ENCODE measurements at regions of chrX and their contacts with region 1.

Region 1: GRCh38 chrX:119516157-119516702 is 48.0 kb downstream of the SLC25A5 start:
- DNase-seq: peak; percentile 67
- H3K4me3 ChIP-seq: no peak overlapping the region
- H3K27ac ChIP-seq: no peak overlapping the region
- H3K4me1 ChIP-seq: no peaks in the 10 kb centered on the region
- H3K27me3 ChIP-seq: no peaks in the 10 kb centered on the region
- CTCF ChIP-seq: peak; percentile 69 to 82
- POLR2A ChIP-seq: no peak

Region 2: GRCh38 chrX:119325456-119325855 is 190.8 kb before region 1 on chrX:
- CTCF ChIA-PET with region 1: no interaction called
- POLR2A ChIA-PET with region 1: no interaction called
- dilution Hi-C with region 1: no loop called
- intact Hi-C with region 1: no loop called
- DNase-seq: no peak
- H3K4me3 ChIP-seq: no peak overlapping the region
- H3K27ac ChIP-seq: no peak overlapping the region
- H3K4me1 ChIP-seq: no peaks in the 10 kb centered on the region
- H3K27me3 ChIP-seq: no peaks in the 10 kb centered on the region
- CTCF ChIP-seq: no peak
- POLR2A ChIP-seq: no peak

Region 3: GRCh38 chrX:119391279-119391678 is 125.0 kb before region 1 on chrX:
- CTCF ChIA-PET with region 1: interaction called, 3 read pairs
- POLR2A ChIA-PET with region 1: no interaction called
- dilution Hi-C with region 1: no loop called
- intact Hi-C with region 1: loop called (anchors 1 kb)
- DNase-seq: peak; percentile 34
- H3K4me3 ChIP-seq: no peak overlapping the region
- H3K27ac ChIP-seq: no peak overlapping the region
- H3K4me1 ChIP-seq: no peaks in the 10 kb centered on the region
- H3K27me3 ChIP-seq: no peaks in the 10 kb centered on the region
- CTCF ChIP-seq: peak in 1 of 2 donors; percentile 15
- POLR2A ChIP-seq: no peak

Region 4: GRCh38 chrX:119410027-119410823 is 106.0 kb before region 1 on chrX:
- CTCF ChIA-PET with region 1: no interaction called
- POLR2A ChIA-PET with region 1: no interaction called
- dilution Hi-C with region 1: no loop called
- intact Hi-C with region 1: no loop called
- DNase-seq: no peak
- H3K4me3 ChIP-seq: no peak overlapping the region
- H3K27ac ChIP-seq: no peak overlapping the region
- H3K4me1 ChIP-seq: no peaks in the 10 kb centered on the region
- H3K27me3 ChIP-seq: no peaks in the 10 kb centered on the region
- CTCF ChIP-seq: no peak
- POLR2A ChIP-seq: no peak

Region 5: DNA sequence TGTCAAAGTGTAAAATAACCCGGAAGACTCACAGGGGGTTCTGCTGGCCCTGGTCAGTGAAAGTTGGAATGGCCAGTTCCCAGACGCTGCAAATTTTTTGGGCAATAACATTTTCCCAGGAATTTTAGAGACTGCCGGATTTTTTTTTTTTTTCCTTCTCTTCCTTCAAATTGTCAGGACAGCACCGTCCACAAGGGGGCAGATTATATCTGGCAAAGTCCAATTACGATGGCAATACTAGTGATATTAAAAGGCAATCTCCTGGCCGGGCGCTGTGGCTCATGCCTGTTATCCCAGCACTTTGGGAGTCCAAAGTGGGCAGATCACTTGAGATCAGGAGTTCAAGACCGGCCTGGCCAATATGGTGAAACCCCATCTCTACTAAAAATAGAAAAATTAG is 27.5 kb before region 1 on chrX:
- CTCF ChIA-PET with region 1: interaction called, 217 read pairs
- POLR2A ChIA-PET with region 1: no interaction called
- dilution Hi-C with region 1: no loop called
- intact Hi-C with region 1: loop called (anchors 1 kb)
- DNase-seq: peak; percentile 33
- H3K4me3 ChIP-seq: no peak overlapping the region
- H3K27ac ChIP-seq: no peak overlapping the region
- H3K4me1 ChIP-seq: no peaks in the 10 kb centered on the region
- H3K27me3 ChIP-seq: no peaks in the 10 kb centered on the region
- CTCF ChIP-seq: peak; percentile 39 to 40
- POLR2A ChIP-seq: no peak

Region 6: GRCh38 chrX:119574394-119575266 is 58.4 kb after region 1 on chrX and contains the start of gene UBE2A:
- CTCF ChIA-PET with region 1: interaction called, 4 read pairs
- POLR2A ChIA-PET with region 1: no interaction called
- dilution Hi-C with region 1: no loop called
- intact Hi-C with region 1: loop called (anchors 1 kb)
- DNase-seq: peak; percentile 90
- H3K4me3 ChIP-seq: peak within 1 kb of the TSS; percentile 75 to 85 (median 85)
- H3K27ac ChIP-seq: peak within 1 kb of the TSS; percentile 71
- H3K4me1 ChIP-seq: peaks cover 10% of the 10 kb centered on the region
- H3K27me3 ChIP-seq: no peaks in the 10 kb centered on the region
- CTCF ChIP-seq: no peak
- POLR2A ChIP-seq: peak; percentile 82
- total RNA-seq, gene UBE2A: 66.1 and 66.9 TPM in 2 replicates

Region 7: DNA sequence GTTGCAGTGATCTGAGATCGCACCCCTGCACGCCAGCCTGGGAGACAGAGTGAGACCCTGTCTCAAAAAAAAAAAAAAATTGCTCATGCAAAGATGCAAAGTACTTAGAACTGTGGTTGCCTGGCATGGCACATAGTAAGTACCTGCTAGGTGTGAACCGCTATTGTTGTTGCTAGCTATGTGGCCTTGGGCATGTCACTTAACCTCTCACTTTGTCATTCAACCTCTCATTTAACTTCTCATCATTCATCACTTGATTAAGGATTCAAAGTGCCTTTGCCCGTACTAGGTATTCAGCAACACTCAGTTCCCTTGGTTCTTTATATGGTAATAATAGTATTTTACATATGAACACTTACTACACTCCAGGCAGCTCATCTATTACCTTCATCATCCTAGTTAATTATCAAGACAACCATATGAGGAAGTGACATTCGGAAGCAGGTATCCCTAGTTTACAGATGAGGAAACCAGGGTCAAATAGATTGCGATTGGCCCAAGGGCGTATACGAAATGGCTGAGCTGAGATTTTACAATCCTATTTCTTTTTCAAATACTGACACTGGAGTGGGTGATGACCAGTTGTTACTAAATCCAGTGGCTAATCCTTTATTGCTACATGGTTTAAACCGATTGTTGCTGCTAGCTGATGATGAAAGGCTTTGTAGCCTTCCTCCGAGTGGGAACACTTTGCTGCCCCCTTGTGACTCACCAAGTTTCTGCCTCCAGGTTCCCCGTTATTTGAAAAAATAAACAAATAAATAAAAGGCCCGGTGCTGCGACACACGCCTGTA is 213.4 kb after region 1 on chrX:
- CTCF ChIA-PET with region 1: interaction called, 28 read pairs
- POLR2A ChIA-PET with region 1: no interaction called
- dilution Hi-C with region 1: no loop called
- intact Hi-C with region 1: loop called (anchors 1 kb)
- DNase-seq: peak; percentile 59
- H3K4me3 ChIP-seq: no peak overlapping the region
- H3K27ac ChIP-seq: no peak overlapping the region
- H3K4me1 ChIP-seq: no peaks in the 10 kb centered on the region
- H3K27me3 ChIP-seq: no peaks in the 10 kb centered on the region
- CTCF ChIP-seq: peak; percentile 35 to 50
- POLR2A ChIP-seq: no peak

Region 8: DNA sequence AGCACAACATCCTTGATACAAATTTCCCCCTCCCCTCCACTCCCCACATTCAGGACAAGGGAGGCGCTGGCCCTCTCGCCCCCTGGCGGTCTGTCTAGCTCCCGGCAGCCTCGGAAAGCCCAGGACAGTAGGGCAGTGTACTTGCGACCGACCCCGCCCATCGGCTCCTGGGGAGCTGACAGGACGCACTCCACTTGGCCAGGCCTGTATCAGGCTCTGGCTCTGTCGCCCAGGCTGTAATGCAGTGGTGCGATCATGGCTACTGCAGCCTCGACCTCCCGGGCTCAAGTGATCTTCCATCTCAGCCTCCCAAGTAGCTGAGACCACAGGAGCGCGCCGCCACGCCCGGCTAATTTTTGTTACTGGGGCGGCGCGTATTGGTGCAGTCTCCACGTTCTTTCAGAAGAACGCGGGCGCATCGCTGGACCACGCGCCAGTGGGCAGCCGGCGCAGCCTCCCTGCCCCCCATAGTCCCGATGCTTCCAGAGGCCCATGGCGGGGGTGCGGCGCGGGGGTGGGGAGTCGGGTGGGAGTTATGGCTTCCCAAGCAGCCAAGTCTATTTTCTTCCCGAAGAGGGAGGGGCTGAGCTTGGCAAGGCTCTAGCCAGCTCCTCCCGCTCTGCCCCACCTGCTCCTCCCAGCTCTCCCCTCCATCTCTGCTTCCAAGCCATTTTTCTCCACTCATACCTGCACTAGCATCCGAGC is 371.6 kb after region 1 on chrX:
- CTCF ChIA-PET with region 1: interaction called, 3 read pairs
- POLR2A ChIA-PET with region 1: no interaction called
- dilution Hi-C with region 1: no loop called
- intact Hi-C with region 1: loop called (anchors 1 kb)
- DNase-seq: peak; percentile 57
- H3K4me3 ChIP-seq: peak overlapping the region; percentile 22 to 45 (median 35)
- H3K27ac ChIP-seq: no peak overlapping the region
- H3K4me1 ChIP-seq: no peaks in the 10 kb centered on the region
- H3K27me3 ChIP-seq: no peaks in the 10 kb centered on the region
- CTCF ChIP-seq: peak; percentile 55 to 76
- POLR2A ChIP-seq: no peak